K562 (cell line): ENCODE measurements at regions of chr16 and their contacts with region 1.

Region 1: GRCh38 chr16:74309789-74310781 is 13.5 kb downstream of the PSMD7 start:
- DNase-seq: peak; percentile 41 to 59 (median 48)
- ATAC-seq: peak; percentile 74
- H3K4me3 ChIP-seq: no peak overlapping the region
- H3K27ac ChIP-seq: no peak overlapping the region
- H3K4me1 ChIP-seq: no peaks in the 10 kb centered on the region
- H3K27me3 ChIP-seq: no peaks in the 10 kb centered on the region
- CTCF ChIP-seq: peak; percentile 65 to 87 (median 74)
- EP300 ChIP-seq: no peak
- POLR2A ChIP-seq: no peak
- RAD21 ChIP-seq: peak; percentile 71 to 87

Region 2: DNA sequence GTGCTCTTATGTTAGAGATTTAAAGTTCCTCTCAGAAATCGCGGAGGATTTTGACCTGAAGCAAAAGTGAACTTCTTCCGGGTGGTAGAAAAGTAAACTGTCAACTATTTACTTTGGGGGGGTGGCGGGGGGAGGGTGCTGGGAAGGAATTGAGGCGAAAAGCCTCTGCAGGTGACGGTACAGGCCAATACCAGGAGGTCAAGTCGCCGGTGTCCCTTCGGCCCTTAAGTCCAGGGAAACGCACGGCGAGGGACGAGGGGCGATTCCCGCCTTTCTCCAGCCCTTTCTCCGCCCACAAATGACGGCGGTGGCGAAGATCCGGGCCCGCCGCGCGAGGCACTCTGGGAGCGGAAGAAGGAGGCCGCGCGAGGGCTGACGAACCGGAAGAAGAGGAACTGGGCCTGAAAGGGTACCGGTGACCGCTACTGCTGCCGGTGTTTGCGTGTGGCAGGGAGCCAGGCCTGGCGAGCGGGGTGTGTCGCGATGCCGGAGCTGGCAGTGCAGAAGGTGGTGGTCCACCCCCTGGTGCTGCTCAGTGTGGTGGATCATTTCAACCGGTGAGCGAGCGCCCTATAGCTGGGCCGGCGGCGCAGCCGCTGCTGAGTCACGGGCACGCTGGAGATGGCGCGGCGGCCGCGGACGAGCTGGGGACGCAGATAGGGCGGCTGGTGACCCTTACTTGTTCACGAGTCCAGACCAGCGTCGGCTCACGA is 13.5 kb before region 1 on chr16 and contains the start of gene PSMD7:
- CTCF ChIA-PET with region 1: interaction called, 4 read pairs
- POLR2A ChIA-PET with region 1: interaction called, 22 read pairs
- in situ Hi-C with region 1: no loop called
- intact Hi-C with region 1: no loop called
- DNase-seq: peak; percentile 87 to 96 (median 89)
- ATAC-seq: peak; percentile 95
- H3K4me3 ChIP-seq: peak within 1 kb of the TSS; percentile 86
- H3K27ac ChIP-seq: peak within 1 kb of the TSS; percentile 92
- H3K4me1 ChIP-seq: peaks cover 7 to 13% of the 10 kb centered on the region in 2 experiments; a peak in 3 of 5 replicates
- H3K27me3 ChIP-seq: no peaks in the 10 kb centered on the region
- CTCF ChIP-seq: no peak
- EP300 ChIP-seq: peak; percentile 15; the same call in 1 of the 2 replicates
- POLR2A ChIP-seq: peak; percentile 97
- RAD21 ChIP-seq: no peak
- polyA plus RNA-seq, gene PSMD7: 100 to 142 TPM

Region 3: GRCh38 chr16:74438492-74439041 is 128.5 kb after region 1 on chr16:
- CTCF ChIA-PET with region 1: no interaction called
- POLR2A ChIA-PET with region 1: no interaction called
- in situ Hi-C with region 1: no loop called
- intact Hi-C with region 1: loop called (anchors 10 kb)
- DNase-seq: no peak
- ATAC-seq: no peak
- H3K4me3 ChIP-seq: no peak overlapping the region
- H3K27ac ChIP-seq: no peak overlapping the region
- H3K4me1 ChIP-seq: peaks cover 0 to 8% of the 10 kb centered on the region in 2 experiments; a peak in 3 of 5 replicates
- H3K27me3 ChIP-seq: no peaks in the 10 kb centered on the region
- CTCF ChIP-seq: no peak
- EP300 ChIP-seq: no peak
- POLR2A ChIP-seq: no peak
- RAD21 ChIP-seq: no peak

Region 4: GRCh38 chr16:74623214-74623842 is 313.2 kb after region 1 on chr16:
- CTCF ChIA-PET with region 1: interaction called, 9 read pairs
- POLR2A ChIA-PET with region 1: interaction called, 3 read pairs
- in situ Hi-C with region 1: no loop called
- intact Hi-C with region 1: loop called (anchors 5 kb)
- DNase-seq: peak; percentile 37 to 59 (median 38)
- ATAC-seq: peak; percentile 76
- H3K4me3 ChIP-seq: no peak overlapping the region
- H3K27ac ChIP-seq: no peak overlapping the region
- H3K4me1 ChIP-seq: no peaks in the 10 kb centered on the region
- H3K27me3 ChIP-seq: no peaks in the 10 kb centered on the region
- CTCF ChIP-seq: peak; percentile 30 to 68 (median 59); a peak in 5 of 6 replicates
- EP300 ChIP-seq: no peak
- POLR2A ChIP-seq: no peak
- RAD21 ChIP-seq: peak; percentile 55 to 79

Region 5: GRCh38 chr16:74633686-74634085 is 323.6 kb after region 1 on chr16:
- CTCF ChIA-PET with region 1: no interaction called
- POLR2A ChIA-PET with region 1: no interaction called
- in situ Hi-C with region 1: loop called (anchors 10 kb)
- intact Hi-C with region 1: no loop called
- DNase-seq: no peak
- ATAC-seq: no peak
- H3K4me3 ChIP-seq: no peak overlapping the region
- H3K27ac ChIP-seq: no peak overlapping the region
- H3K4me1 ChIP-seq: no peaks in the 10 kb centered on the region
- H3K27me3 ChIP-seq: no peaks in the 10 kb centered on the region
- CTCF ChIP-seq: no peak
- EP300 ChIP-seq: no peak
- POLR2A ChIP-seq: no peak
- RAD21 ChIP-seq: no peak